ENCODE measurements at regions of chr12 and their contacts with region 1.

Region 1: GRCh38 chr12:27305673-27306456 is 26.8 kb upstream of the BMAL2 start:
- DNase-seq: no peak
- H3K4me3 ChIP-seq: no peak overlapping the region
- H3K27ac ChIP-seq: peak overlapping the region; percentile 51 to 57
- H3K4me1 ChIP-seq: peaks cover 0 to 54% (median 7%) of the 10 kb centered on the region in 4 donors
- H3K27me3 ChIP-seq: no peaks in the 10 kb centered on the region
- CTCF ChIP-seq: peak; percentile 49 to 64

Region 2: GRCh38 chr12:27024291-27024690 is 281.6 kb before region 1 on chr12:
- intact Hi-C with region 1: loop called (anchors 5 kb)
- DNase-seq: no peak
- H3K4me3 ChIP-seq: peak overlapping the region; percentile 70 to 83
- H3K27ac ChIP-seq: no peak overlapping the region
- H3K4me1 ChIP-seq: peaks cover 0 to 32% (median 18%) of the 10 kb centered on the region in 4 donors
- H3K27me3 ChIP-seq: no peaks in the 10 kb centered on the region
- CTCF ChIP-seq: no peak

Region 3: GRCh38 chr12:27233814-27234213 is 72.1 kb before region 1 on chr12:
- intact Hi-C with region 1: no loop called
- DNase-seq: no peak
- H3K4me3 ChIP-seq: no peak overlapping the region
- H3K27ac ChIP-seq: no peak overlapping the region
- H3K4me1 ChIP-seq: peaks cover 0 to 8% (median 0%) of the 10 kb centered on the region in 4 donors
- H3K27me3 ChIP-seq: no peaks in the 10 kb centered on the region
- CTCF ChIP-seq: no peak

Region 4: DNA sequence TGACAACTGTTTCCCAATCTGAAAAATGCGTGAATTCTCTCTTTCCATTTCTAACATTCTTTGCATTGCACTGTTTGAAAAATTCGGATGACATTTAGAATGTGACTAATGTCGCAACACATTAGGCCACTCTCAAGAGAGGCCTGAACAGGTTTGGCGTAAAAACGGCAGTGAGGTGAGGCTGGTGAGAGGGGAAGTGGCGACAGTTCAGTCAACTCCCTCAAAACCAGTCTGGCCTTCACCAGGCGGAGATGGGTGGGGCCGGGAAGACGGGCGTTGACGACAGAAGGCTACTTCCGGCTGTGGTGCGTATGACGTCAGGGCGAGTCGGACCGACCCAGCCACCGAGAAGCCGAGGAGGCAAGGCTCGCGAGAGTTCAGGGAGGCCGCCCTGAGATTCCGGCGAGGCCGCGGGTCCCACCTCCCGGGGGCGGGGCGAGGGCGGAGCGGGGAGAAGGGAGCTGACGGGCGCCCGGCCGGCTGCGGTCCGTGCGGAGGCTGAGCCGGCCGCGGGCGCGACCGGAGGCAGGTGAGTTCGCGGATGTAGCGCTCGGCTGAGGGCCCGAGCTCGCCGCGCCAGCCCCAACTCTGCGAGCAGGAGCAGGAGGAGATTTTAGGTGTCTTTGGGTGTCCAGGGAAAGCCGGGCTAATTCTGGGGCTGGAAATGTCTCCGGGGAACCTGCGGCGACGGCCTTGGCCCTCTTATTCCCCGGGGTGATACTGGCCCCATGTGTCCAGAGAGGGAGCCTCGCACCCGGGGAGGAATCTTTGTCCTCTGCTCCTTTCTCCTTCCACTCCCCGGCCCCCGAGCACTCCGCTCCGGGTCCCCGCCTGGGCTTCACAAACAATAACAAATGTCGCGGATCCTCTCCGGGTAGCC is 61.8 kb before region 1 on chr12 and contains the start of gene STK38L:
- intact Hi-C with region 1: loop called (anchors 10 kb)
- DNase-seq: peak; percentile 94 to 98
- H3K4me3 ChIP-seq: peak within 1 kb of the TSS; percentile 78 to 93
- H3K27ac ChIP-seq: peak within 1 kb of the TSS; percentile 93 to 96
- H3K4me1 ChIP-seq: peaks cover 0 to 25% (median 4%) of the 10 kb centered on the region in 4 donors
- H3K27me3 ChIP-seq: no peaks in the 10 kb centered on the region
- CTCF ChIP-seq: no peak

Measured in tibial artery (tissue), 4 donors.